ENCODE measurements at regions of chr18 and their contacts with region 1.

Region 1: DNA sequence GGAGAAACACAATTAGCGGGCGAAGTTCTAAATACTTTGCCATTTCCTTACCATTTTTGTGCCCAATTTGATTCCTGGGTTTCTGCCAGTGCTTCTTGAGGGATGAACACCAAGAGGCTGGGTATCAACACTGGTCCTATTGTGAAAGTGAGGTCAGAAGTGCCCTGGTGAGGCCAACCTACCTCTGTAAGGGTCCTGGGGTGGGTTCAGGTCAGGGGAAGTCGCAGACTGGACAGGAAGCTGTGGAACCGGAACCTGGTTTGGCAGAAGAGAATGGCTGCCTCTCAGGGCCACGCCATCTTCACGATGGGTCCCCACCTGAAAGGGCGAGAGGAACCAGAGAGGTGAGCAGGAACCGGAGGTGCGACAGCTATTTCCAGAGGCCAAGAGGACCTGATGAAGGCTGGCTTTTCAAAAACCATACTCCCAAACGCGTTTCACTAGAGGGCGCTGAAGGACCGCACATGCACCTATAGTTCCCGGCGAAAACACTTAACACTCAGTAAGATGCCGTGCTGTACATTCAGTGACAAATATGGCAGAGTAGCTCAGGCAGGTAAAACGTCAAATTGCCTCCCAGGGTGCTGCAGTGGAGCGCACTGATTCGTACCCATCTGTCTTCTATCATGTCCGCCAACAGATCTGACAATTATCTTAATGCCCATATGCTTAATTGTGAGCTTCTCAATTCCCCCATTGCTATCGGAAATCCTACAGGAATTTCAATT is 275.3 kb upstream of the CCDC68 start:
- DNase-seq: peak; percentile 31
- H3K4me3 ChIP-seq: no peak overlapping the region
- CTCF ChIP-seq: peak; percentile 81

Region 2: DNA sequence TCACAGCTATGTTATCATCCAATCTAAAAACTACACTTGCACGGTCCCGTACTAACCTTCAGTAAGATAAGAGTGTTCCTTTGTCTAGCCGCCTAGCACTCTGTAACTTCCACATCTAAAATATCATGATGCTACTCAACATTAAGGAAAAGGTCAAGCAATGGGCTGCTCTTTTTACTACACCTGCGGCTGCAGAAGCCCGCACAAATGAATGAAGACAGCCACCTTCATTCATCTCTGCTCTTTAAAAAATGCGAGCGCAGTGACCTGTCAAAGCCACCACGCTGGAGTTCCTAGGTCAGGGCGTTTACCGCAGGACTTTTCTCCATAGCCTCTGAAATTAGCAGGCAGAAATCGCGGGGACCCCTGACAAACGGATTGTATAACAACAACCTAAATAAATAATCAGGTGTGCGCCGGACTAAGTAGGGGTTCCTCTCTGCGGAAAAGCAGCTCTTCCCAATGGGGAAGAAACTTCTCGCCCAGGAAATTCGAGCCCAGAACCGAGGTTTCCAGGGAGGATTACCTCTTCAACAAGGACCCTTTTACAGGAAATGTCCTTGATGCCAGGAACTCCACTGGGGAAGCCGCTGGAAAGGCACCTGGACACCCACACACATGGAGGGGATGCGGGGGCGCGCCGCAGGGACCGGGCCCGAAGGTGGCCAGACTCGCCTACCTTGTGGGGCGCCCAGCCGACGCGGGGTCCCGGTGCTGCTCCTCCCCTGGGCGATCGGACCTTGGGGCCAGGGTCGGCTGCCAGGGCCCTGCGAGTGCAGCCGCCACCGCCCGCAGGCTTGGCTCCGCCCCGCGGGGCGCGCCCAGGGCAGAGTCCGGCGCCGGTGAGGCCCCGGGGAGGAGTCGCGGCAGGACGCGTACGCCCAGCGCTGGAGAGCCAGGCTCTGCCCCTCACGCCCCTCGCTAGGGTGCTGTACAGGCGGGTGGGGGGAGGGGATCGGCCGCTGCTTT is 275.6 kb before region 1 on chr18 and contains the start of gene CCDC68:
- CTCF ChIA-PET with region 1: no interaction called
- POLR2A ChIA-PET with region 1: no interaction called
- DNase-seq: no peak
- H3K4me3 ChIP-seq: peak within 1 kb of the TSS; percentile 48
- CTCF ChIP-seq: no peak

Region 3: DNA sequence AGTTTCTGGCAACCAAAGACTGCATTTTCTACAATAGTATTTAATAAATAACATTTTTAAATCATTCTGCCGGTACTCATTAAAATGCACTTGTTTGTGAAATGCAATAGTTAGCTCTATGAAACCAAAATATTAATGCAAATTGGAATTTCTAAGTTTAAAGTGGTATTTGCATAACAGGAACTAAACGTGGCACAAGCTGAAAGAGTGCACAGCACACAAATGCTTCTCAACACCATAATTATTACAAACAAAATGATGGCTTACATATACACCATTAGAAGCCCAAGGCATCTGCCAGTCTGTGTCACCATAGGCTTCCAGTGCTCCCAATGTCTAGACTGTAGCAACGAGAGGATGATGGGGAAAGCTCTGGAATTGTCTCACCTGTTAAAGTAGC is 73.0 kb after region 1 on chr18:
- CTCF ChIA-PET with region 1: interaction called, 12 read pairs
- POLR2A ChIA-PET with region 1: no interaction called
- DNase-seq: no peak
- H3K4me3 ChIP-seq: no peak overlapping the region
- CTCF ChIP-seq: no peak

Region 4: GRCh38 chr18:55326134-55326533 is 91.6 kb after region 1 on chr18:
- CTCF ChIA-PET with region 1: interaction called, 39 read pairs
- POLR2A ChIA-PET with region 1: no interaction called
- DNase-seq: no peak
- H3K4me3 ChIP-seq: no peak overlapping the region
- CTCF ChIP-seq: no peak

Region 5: DNA sequence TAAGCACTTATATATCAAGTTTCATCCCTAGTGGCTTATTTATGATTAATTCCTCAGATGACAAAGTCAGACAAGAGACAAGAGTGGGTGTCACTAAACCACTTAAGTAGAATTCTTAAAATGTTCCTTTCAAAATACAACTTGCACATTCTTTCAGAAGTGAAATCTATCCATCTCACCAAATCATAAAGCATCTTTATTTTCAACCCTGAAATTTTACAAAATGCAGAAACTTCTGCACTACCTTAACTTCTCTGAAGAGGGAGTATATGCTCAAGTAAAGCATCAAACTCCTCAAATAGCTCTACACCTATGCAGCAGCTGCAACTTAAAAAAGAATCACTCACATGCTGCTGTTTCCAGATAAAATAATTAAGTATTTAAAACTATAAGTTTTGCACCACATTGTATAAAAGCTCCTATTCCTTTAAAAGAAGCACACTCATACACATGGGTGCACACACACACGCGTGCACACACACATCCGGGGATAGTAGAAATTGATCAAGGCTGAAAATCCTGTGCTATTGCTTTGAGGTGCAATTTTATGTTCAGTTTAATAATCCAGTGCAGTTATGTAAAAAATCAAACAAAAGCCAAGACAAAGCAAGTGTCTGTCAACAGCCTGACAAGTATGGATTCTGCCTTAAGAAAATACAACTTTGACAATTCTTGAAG is 109.0 kb after region 1 on chr18:
- CTCF ChIA-PET with region 1: interaction called, 46 read pairs
- POLR2A ChIA-PET with region 1: no interaction called
- DNase-seq: no peak
- H3K4me3 ChIP-seq: no peak overlapping the region
- CTCF ChIP-seq: peak; percentile 26

Region 6: GRCh38 chr18:55415258-55415871 is 180.8 kb after region 1 on chr18:
- CTCF ChIA-PET with region 1: interaction called, 14 read pairs
- POLR2A ChIA-PET with region 1: no interaction called
- DNase-seq: no peak
- H3K4me3 ChIP-seq: no peak overlapping the region
- CTCF ChIP-seq: peak; percentile 78

Measured in AG04449 (cell line).